Mammary epithelial cell (primary cell): ENCODE measurements at regions of chr3 and their contacts with region 1.

Region 1: DNA sequence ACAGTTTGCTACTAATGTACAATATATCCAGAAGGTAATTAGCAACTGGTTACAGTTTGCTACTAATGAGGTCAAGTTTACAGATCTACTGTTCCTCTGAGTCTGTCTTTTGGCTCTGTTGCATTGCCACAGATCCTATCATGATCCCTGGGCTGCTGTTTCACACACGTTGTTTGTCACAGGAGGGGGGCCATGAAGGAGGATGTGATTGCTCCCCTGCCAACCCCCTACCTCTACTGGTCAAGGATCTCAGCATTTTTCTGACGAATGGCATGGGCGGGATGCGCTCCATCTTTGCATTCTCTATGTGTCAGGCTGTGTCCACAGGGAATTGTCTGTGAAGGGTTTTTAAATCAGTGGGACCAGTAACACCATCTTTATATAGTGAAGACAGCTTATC is 91.9 kb downstream of the CHL1 start:
- DNase-seq: no peak
- H3K4me3 ChIP-seq: no peak overlapping the region
- H3K27ac ChIP-seq: no peak overlapping the region
- H3K4me1 ChIP-seq: no peaks in the 10 kb centered on the region
- H3K27me3 ChIP-seq: no peaks in the 10 kb centered on the region
- CTCF ChIP-seq: no peak

Region 2: GRCh38 chr3:197828-198491 is 90.5 kb before region 1 on chr3:
- CTCF ChIA-PET with region 1: no interaction called
- dilution Hi-C with region 1: loop called (anchors 5 kb)
- in situ Hi-C with region 1: no loop called
- intact Hi-C with region 1: no loop called
- DNase-seq: no peak
- H3K4me3 ChIP-seq: no peak overlapping the region
- H3K27ac ChIP-seq: no peak overlapping the region
- H3K4me1 ChIP-seq: peaks cover 14% of the 10 kb centered on the region
- H3K27me3 ChIP-seq: peaks cover 30% of the 10 kb centered on the region
- CTCF ChIP-seq: no peak